ENCODE measurements at regions of chr6 and their contacts with region 1.

Region 1: DNA sequence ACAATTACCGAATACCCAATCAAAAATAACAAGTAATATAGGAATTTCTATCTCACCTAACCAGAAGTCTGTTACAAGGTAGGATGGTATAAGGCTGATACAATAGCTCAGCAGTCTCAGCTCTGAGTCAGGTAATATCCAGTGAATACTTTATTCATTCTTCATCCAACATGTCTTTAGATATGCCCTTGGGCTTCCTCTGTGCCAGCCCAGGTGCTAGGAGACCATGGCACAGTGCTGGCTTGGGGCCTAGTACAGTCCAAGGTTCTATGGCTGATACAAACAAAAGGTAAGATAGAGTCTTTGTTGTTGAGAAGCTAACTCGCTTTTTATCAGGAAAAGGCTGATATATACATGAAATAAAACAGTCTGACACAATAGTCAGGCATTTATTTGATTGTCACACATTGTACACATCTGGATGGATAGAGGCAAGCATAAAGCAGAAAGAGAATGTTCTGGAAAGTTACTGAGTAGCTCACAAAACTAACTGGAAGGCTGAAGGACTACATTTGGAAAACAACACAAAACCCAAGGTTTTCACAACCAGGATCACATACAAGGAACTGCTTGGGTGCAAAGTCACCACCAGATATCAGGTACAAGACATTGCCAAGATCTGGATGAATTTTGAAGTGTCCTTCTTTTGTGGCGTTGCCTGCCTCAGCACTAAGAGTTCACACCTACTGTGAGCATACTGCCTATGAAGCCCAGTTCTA is 110.4 kb upstream of the SCAF8 start:
- DNase-seq: no peak
- H3K4me3 ChIP-seq: no peak overlapping the region
- H3K27ac ChIP-seq: no peak overlapping the region
- H3K4me1 ChIP-seq: no peaks in the 10 kb centered on the region
- H3K27me3 ChIP-seq: no peaks in the 10 kb centered on the region
- CTCF ChIP-seq: no peak
- EP300 ChIP-seq: no peak
- POLR2A ChIP-seq: no peak

Region 2: GRCh38 chr6:154428897-154429296 is 193.9 kb before region 1 on chr6:
- in situ Hi-C with region 1: no loop called
- intact Hi-C with region 1: loop called (anchors 5 kb)
- DNase-seq: no peak
- H3K4me3 ChIP-seq: no peak overlapping the region
- H3K27ac ChIP-seq: no peak overlapping the region
- H3K4me1 ChIP-seq: peaks cover 0 to 16% (median 1%) of the 10 kb centered on the region in 4 donors
- H3K27me3 ChIP-seq: no peaks in the 10 kb centered on the region
- CTCF ChIP-seq: no peak
- EP300 ChIP-seq: no peak
- POLR2A ChIP-seq: no peak